Activated naive CD4-positive, alpha-beta T cell treated with anti-CD3 and anti-CD28 coated beads, Interleukin-2, amount 10 ng/mL, durations not matched to agents 7 days and 5 days (primary cell): ENCODE measurements at regions of chr14 and their contacts with region 1.

Region 1: GRCh38 chr14:103808403-103809001 is 38.9 kb downstream of the PPP1R13B start:
- DNase-seq: peak; percentile 77
- H3K4me3 Mint-ChIP-seq: no peak overlapping the region
- H3K27ac Mint-ChIP-seq: no peak overlapping the region
- H3K4me1 Mint-ChIP-seq: peaks cover 8% of the 10 kb centered on the region
- H3K27me3 Mint-ChIP-seq: no peaks in the 10 kb centered on the region

Region 2: DNA sequence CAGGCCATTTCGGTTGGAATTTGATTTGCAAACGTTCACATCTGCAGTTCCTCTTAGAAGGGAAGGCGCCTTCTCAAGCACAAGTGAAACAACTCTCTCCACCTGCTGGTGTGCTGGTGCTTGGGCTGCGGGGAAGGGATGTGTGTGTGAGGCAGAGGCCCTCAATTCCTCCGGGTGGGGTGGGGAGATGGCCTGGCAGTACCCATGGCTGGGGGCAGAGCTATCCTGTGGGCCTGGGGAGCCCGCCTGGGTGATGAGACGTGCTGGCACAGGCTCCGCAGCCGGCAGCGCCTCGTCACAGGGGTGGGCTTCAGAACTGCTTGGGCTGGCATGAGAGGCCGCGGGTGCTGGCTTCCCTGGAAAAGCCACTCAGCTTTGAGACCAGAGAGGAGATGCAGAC is 90.8 kb after region 1 on chr14:
- CTCF ChIA-PET with region 1: interaction called, 16 read pairs
- DNase-seq: no peak
- H3K4me3 Mint-ChIP-seq: no peak overlapping the region
- H3K27ac Mint-ChIP-seq: no peak overlapping the region
- H3K4me1 Mint-ChIP-seq: peaks cover 4% of the 10 kb centered on the region
- H3K27me3 Mint-ChIP-seq: peaks cover 5% of the 10 kb centered on the region

Region 3: DNA sequence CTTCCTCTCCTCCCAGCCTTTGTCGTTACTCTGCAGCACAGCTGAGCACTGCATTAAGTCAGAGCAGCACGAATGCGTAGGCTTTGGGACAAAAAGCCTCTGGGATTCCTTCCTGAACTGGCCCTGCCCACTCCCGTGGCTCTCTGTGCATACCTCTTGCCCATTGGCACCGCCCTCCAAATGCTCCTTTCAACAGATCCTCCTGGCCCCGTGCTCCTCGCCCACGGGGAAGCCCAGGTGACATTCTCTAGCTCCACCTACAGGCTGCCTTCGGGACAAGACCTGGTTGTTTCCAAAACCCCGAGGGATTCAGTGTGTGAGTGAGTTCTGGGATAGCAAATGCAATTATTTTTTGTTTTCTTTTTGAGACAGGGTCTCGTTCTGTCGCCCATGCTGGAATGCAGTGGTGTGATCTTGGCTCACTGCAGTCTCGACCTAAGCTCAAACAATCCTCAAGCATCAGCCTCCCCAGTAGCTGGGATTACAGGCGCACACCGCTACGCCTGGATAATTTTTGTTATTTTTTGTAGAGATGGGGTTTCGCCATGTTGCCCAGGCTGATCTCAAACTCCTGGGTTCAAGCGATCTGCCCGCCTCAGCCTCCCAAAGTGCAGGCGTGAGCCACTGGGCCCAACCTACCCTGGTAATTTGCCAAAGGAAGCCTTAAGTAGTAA is 101.9 kb after region 1 on chr14:
- CTCF ChIA-PET with region 1: interaction called, 46 read pairs
- DNase-seq: peak; percentile 80
- H3K4me3 Mint-ChIP-seq: peak overlapping the region; percentile 29
- H3K27ac Mint-ChIP-seq: peak overlapping the region; percentile 77
- H3K4me1 Mint-ChIP-seq: peaks cover 25% of the 10 kb centered on the region
- H3K27me3 Mint-ChIP-seq: no peaks in the 10 kb centered on the region

Region 4: DNA sequence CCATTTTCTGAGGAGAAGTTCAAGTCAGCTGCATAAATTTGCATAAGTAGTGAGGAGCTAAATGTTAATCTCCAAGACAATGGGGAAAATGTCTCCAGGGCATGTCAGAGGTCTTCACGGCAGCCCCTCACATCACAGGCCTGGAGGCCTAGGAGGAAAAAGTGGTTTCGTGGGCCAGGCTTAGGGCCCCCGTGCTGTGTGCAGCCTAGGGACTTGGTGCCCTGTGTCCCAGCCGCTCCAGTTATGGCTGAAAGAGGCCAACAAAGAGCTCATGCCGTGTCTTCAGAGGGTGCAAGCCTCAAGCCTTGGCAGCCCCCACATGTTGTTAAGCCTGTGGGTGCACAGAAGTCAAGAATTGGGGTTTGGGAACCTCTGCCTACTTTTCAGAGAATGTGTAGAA is 175.7 kb after region 1 on chr14:
- CTCF ChIA-PET with region 1: interaction called, 16 read pairs
- DNase-seq: no peak
- H3K4me3 Mint-ChIP-seq: no peak overlapping the region
- H3K27ac Mint-ChIP-seq: no peak overlapping the region
- H3K4me1 Mint-ChIP-seq: no peaks in the 10 kb centered on the region
- H3K27me3 Mint-ChIP-seq: peaks cover 14% of the 10 kb centered on the region

Region 5: DNA sequence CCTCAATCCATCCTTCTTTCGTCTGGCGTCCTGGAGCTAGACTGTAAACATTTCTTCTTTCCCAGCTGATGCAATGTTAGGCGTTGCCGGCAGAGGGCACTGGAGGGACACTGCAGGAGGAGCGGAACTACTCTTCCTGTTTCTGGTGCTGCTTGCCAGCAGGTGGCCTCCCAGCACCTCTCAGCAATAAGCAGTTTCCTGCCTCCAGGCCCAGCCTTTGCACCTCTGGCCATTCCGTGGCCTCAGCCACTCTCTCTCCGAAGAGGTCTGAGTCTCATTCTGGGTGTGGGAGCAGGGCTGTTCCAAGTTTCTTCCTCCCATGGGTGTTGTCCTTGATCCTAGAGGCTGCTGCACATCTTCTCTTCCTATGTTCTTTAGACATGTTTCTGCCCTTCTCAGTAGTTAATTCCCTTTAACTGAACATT is 269.5 kb after region 1 on chr14:
- CTCF ChIA-PET with region 1: interaction called, 12 read pairs
- DNase-seq: peak; percentile 92
- H3K4me3 Mint-ChIP-seq: no peak overlapping the region
- H3K27ac Mint-ChIP-seq: peak overlapping the region; percentile 26
- H3K4me1 Mint-ChIP-seq: peaks cover 20% of the 10 kb centered on the region
- H3K27me3 Mint-ChIP-seq: peaks cover 12% of the 10 kb centered on the region